Activated CD4-positive, alpha-beta memory T cell treated with anti-CD3 and anti-CD28 coated beads, Interleukin-2, amount 10 ng/mL, durations not matched to agents 7 days and 5 days (primary cell): ENCODE measurements at regions of chr10 and their contacts with region 1.

Region 1: DNA sequence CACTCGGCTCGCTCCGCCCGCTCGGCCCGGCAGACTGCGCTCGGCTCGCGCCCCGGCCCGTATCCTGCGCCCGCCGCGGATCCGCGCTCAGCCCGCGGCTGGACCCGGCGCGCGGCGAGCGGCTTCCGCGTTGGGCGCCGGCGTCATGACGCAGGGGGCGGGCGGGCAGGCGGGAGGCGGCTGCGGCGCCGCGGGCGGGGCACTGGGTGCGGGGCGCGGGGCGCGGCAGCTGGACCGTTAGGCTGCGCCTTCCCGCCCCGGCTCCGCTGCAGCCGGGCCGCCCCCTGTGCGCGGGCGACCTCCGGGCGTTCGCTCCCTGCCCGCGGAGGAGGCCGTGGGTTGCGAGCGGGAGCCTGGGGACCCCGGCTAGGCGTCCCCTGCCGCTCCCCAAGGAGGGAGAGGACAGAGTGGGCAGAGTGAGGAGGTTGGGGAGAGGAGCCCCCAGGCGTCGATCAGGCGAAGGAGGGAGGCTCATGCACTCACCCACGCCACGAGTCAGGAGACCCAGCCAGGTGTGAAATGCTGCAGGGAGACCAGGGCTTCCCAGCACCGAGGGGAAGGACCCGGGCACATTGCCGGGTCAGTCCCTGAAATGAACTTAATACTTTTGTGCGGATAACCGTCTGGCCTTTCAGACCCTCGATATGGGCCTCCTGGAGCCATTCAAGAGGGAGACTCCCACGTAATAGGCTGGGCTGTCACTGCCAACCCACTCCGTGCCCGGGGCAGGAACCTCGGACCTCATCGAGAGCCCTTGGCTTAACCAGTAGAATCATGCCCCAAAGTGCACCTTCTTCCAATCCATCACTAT is at the start of gene PIP4K2A:
- DNase-seq: peak; percentile 82
- H3K4me3 Mint-ChIP-seq: peak within 1 kb of the TSS; percentile 85
- H3K27ac Mint-ChIP-seq: peak within 1 kb of the TSS; percentile 84
- H3K4me1 Mint-ChIP-seq: peaks cover 30% of the 10 kb centered on the region
- H3K27me3 Mint-ChIP-seq: no peaks in the 10 kb centered on the region
- total RNA-seq, gene PIP4K2A: 126 to 137 TPM

Region 2: DNA sequence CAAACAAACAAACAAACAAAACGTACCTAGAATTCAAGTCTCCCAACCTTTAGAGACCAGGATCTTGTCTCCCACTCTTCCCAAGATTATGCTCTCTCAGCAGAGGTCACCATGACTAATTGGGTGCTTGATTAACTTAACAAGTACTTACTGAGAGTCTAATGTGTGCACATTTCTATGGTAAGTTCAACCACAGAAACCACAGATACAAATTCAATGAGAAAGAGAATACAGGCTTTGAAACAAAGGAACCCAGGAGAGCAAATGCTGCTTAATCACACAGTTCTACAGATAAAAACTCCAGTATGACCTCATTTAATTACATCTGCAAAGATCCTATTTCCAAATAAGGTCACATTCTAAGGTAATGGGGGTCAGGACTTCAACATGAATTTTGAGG is 854.0 kb before region 1 on chr10:
- CTCF ChIA-PET with region 1: no interaction called
- POLR2A ChIA-PET with region 1: no interaction called
- DNase-seq: no peak
- H3K4me3 Mint-ChIP-seq: no peak overlapping the region
- H3K27ac Mint-ChIP-seq: no peak overlapping the region
- H3K4me1 Mint-ChIP-seq: peaks cover 7% of the 10 kb centered on the region
- H3K27me3 Mint-ChIP-seq: no peaks in the 10 kb centered on the region

Region 3: DNA sequence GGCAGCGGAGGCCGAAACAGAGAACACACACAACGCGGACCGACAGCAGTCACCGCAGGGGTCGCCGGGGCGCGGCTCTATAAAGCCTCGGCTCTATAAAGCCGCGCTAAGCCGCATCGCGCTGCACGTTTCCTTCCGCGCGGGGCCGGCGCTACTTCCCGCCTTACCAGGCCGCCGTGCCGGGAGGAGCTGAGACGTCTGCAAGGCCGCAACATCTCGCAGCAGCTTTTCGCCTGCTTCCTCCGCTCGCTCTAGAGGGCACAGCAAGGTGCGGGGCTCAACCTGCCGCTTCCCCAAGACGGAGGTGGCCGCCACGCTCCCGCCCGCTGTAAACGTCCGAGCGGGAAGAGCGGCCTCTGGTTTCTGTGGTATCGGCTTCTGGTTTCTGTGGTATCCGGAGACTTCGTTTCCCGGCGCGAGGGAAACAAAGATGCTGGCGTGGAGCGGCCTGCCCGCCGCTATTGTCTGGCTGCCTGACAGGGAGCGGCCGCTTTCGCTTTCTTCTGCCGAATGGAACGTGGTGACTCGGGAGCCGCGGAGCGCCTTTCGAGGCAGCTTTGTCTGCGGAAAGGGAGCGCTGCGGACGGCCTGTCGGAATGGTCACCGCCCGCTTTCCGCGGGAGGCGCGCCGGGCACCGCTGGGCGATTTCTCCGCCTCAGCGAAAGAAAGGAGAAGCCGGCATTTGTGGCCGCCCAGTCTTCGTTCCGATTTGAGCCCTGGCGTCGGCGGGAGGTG is 277.6 kb before region 1 on chr10:
- CTCF ChIA-PET with region 1: no interaction called
- POLR2A ChIA-PET with region 1: interaction called, 16 read pairs
- DNase-seq: peak; percentile 88
- H3K4me3 Mint-ChIP-seq: peak overlapping the region; percentile 92
- H3K27ac Mint-ChIP-seq: peak overlapping the region; percentile 95
- H3K4me1 Mint-ChIP-seq: peaks cover 47% of the 10 kb centered on the region
- H3K27me3 Mint-ChIP-seq: peaks cover 2% of the 10 kb centered on the region

Region 4: DNA sequence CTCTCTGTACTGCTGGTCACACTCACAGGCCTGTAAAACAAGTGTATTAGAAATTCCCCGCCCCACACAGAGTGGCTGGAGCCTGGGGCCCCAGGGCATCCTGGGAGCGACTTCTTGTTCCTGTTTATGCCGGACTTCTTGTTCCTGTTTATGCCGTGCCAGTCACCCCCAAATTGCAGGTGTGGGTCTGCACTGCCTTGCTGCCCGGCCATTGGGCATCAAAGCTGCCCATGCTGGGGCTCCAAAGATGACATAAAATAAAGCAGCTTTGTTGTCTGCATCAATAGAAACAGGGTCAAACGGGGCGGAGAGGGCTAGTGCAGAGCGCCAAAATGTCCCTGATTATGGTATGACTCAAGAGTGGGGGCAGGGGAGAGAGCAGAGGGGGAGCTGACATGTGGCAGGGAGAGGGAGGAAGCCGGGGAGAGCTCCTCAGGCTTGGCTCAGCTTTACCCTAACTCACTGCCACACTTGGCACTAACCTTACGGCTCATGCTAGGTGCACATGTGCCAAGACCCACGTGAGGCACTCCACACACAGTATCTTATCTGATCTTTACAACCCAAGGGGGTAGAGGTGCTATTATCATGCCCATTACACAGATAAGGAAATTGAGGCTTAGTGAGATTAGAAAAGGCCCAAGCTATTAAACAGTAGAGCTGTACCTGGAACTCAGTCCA is 98.7 kb before region 1 on chr10:
- CTCF ChIA-PET with region 1: interaction called, 5 read pairs
- POLR2A ChIA-PET with region 1: interaction called, 26 read pairs
- DNase-seq: peak; percentile 43
- H3K4me3 Mint-ChIP-seq: peak overlapping the region; percentile 72
- H3K27ac Mint-ChIP-seq: peak overlapping the region; percentile 84
- H3K4me1 Mint-ChIP-seq: peaks cover 94% of the 10 kb centered on the region
- H3K27me3 Mint-ChIP-seq: no peaks in the 10 kb centered on the region

Region 5: GRCh38 chr10:22648547-22648961 is 66.1 kb before region 1 on chr10:
- CTCF ChIA-PET with region 1: no interaction called
- POLR2A ChIA-PET with region 1: interaction called, 26 read pairs
- DNase-seq: no peak
- H3K4me3 Mint-ChIP-seq: peak overlapping the region; percentile 66
- H3K27ac Mint-ChIP-seq: peak overlapping the region; percentile 91
- H3K4me1 Mint-ChIP-seq: peaks cover 91% of the 10 kb centered on the region
- H3K27me3 Mint-ChIP-seq: no peaks in the 10 kb centered on the region

Region 6: DNA sequence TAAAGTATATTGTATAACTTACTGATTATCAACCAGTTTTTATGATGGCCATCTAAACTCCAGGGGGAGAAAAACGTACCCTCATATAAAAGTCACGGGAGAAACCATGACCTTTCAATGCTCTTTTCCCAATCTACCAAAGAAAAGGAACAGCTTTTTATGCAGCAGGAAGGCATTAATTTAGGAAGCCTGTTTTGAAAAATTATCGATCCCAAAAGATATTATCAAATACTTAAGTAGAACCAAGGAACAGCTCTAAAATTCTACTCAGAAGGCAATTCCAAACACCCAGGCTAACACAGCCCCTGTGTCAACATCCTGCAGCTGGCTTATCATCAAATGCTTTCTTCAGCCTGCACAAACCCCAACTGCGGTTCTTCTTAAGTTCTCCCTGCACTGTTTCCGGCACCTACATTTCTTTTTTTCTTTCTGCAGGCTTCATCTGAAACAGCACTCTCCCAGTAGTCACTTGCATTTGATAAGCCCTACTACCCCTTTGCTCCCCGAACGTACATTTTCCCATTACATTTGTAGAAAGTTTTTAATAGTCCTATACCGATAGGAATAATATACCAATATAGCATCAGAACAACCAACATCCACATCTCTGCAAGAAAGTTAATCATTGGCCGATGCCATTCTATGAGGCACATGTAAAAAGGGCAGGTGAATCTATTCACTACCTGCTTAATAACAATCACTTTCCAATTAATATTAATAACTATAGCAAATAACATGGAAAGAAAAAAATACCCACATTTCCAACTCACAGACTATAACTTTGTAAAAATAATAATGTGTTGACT is 48.2 kb before region 1 on chr10:
- CTCF ChIA-PET with region 1: no interaction called
- POLR2A ChIA-PET with region 1: interaction called, 56 read pairs
- DNase-seq: peak; percentile 67
- H3K4me3 Mint-ChIP-seq: peak overlapping the region; percentile 77
- H3K27ac Mint-ChIP-seq: peak overlapping the region; percentile 92
- H3K4me1 Mint-ChIP-seq: peaks cover 75% of the 10 kb centered on the region
- H3K27me3 Mint-ChIP-seq: no peaks in the 10 kb centered on the region

Region 7: GRCh38 chr10:22682237-22683139 is 32.2 kb before region 1 on chr10:
- CTCF ChIA-PET with region 1: interaction called, 3 read pairs
- POLR2A ChIA-PET with region 1: interaction called, 114 read pairs
- DNase-seq: peak; percentile 77
- H3K4me3 Mint-ChIP-seq: peak overlapping the region; percentile 69
- H3K27ac Mint-ChIP-seq: peak overlapping the region; percentile 100
- H3K4me1 Mint-ChIP-seq: peaks cover 86% of the 10 kb centered on the region
- H3K27me3 Mint-ChIP-seq: no peaks in the 10 kb centered on the region

Region 8: GRCh38 chr10:22700489-22700888 is 14.2 kb before region 1 on chr10:
- CTCF ChIA-PET with region 1: interaction called, 3 read pairs
- POLR2A ChIA-PET with region 1: interaction called, 20 read pairs
- DNase-seq: no peak
- H3K4me3 Mint-ChIP-seq: no peak overlapping the region
- H3K27ac Mint-ChIP-seq: no peak overlapping the region
- H3K4me1 Mint-ChIP-seq: peaks cover 62% of the 10 kb centered on the region
- H3K27me3 Mint-ChIP-seq: no peaks in the 10 kb centered on the region

Region 9: DNA sequence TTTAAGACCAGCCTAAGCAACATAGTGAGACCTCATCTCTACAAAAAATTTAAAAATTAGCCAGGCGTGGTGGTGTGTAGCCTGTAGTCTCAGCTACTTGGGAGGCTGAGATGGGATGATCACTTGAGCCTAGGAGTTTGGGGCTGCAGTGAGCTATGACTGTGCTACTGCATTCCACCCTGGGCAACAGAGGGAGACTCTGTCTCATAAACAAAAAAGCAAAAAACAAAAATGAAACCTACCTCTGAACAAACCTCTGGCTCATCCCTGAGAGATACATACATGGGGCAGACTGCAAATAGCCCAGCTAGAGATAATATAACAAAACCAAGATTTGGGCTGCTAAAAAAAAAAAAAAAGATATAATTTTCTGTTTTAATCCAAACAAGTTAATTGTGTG is 610.4 kb after region 1 on chr10:
- CTCF ChIA-PET with region 1: no interaction called
- POLR2A ChIA-PET with region 1: no interaction called
- DNase-seq: no peak
- H3K4me3 Mint-ChIP-seq: no peak overlapping the region
- H3K27ac Mint-ChIP-seq: no peak overlapping the region
- H3K4me1 Mint-ChIP-seq: peaks cover 2% of the 10 kb centered on the region
- H3K27me3 Mint-ChIP-seq: peaks cover 5% of the 10 kb centered on the region